ENCODE measurements at regions of chr6 and their contacts with region 1.

Region 1: GRCh38 chr6:120671519-120671918 is 662.8 kb downstream of the TBC1D32 start:
- DNase-seq: peak; percentile 2
- ATAC-seq: peak; percentile 84
- H3K4me3 ChIP-seq: no peak overlapping the region
- H3K27ac ChIP-seq: no peak overlapping the region
- H3K4me1 ChIP-seq: peaks cover 0 to 5% of the 10 kb centered on the region in 2 experiments; a peak in 1 of 4 replicates
- H3K27me3 ChIP-seq: no peaks in the 10 kb centered on the region
- CTCF ChIP-seq: peak in 2 of 3 experiments; percentile 24 to 34; a peak in 3 of 6 replicates
- POLR2A ChIP-seq: no peak
- RAD21 ChIP-seq: no peak

Region 2: GRCh38 chr6:120614723-120615122 is 56.8 kb before region 1 on chr6:
- CTCF ChIA-PET with region 1: no interaction called
- POLR2A ChIA-PET with region 1: no interaction called
- RAD21 ChIA-PET with region 1: no interaction called
- intact Hi-C with region 1: loop called (anchors 5 kb)
- DNase-seq: no peak
- ATAC-seq: no peak
- H3K4me3 ChIP-seq: no peak overlapping the region
- H3K27ac ChIP-seq: no peak overlapping the region
- H3K4me1 ChIP-seq: no peaks in the 10 kb centered on the region
- H3K27me3 ChIP-seq: no peaks in the 10 kb centered on the region
- CTCF ChIP-seq: no peak
- POLR2A ChIP-seq: no peak
- RAD21 ChIP-seq: no peak

Measured in HCT116 (cell line).